Body of pancreas (tissue), 4 donors: ENCODE measurements at regions of chr4 and their contacts with region 1.

Region 1: GRCh38 chr4:89906777-89907521 is 12.3 kb downstream of the MMRN1 start:
- DNase-seq: no peak
- ATAC-seq: no peak
- H3K4me3 ChIP-seq: no peak overlapping the region
- H3K27ac ChIP-seq: no peak overlapping the region
- H3K4me1 ChIP-seq: no peaks in the 10 kb centered on the region
- H3K27me3 ChIP-seq: no peaks in the 10 kb centered on the region
- CTCF ChIP-seq: no peak
- POLR2A ChIP-seq: no peak

Region 2: DNA sequence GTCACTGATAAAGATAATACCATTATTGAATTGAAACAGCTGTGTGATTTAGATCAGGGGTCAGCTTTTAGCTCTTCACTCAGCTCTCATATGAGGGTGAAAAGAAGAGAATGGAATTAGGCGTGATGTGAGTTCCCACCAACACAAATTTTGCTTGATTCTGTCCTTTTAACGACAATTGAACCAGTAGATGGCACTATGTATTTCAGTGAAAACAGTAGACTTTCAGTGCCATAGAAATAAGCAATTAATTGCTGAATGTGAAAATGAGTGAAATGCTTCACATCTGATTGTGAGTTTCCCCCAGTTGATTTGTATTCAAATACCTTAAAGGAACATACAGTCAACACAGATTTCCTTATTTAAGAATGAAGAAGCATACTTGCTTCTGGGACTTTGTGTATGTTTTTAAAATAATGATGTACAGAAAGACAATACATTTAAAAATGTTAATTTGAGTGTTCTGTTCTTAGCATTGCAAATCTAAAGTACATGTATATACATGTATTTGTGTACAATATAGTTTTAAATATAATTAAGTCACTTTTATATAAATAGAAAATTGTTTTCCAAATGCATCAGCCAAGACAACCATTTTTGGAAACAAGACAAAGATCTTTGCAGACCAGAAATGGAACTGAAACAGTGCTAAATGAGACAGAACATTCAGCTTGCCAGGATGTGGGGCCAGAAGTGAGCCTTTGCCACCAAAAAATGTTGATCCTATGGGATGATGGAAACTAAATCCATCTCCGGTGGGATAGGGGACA is 248.8 kb before region 1 on chr4:
- intact Hi-C with region 1: loop called (anchors 10 kb)
- DNase-seq: no peak
- ATAC-seq: no peak
- H3K4me3 ChIP-seq: no peak overlapping the region
- H3K27ac ChIP-seq: no peak overlapping the region
- H3K4me1 ChIP-seq: no peaks in the 10 kb centered on the region
- H3K27me3 ChIP-seq: no peaks in the 10 kb centered on the region
- CTCF ChIP-seq: peak in 5 of 7 experiments; percentile 10 to 41 (median 28)
- POLR2A ChIP-seq: no peak